ENCODE measurements at regions of chr2 and their contacts with region 1.

Region 1: DNA sequence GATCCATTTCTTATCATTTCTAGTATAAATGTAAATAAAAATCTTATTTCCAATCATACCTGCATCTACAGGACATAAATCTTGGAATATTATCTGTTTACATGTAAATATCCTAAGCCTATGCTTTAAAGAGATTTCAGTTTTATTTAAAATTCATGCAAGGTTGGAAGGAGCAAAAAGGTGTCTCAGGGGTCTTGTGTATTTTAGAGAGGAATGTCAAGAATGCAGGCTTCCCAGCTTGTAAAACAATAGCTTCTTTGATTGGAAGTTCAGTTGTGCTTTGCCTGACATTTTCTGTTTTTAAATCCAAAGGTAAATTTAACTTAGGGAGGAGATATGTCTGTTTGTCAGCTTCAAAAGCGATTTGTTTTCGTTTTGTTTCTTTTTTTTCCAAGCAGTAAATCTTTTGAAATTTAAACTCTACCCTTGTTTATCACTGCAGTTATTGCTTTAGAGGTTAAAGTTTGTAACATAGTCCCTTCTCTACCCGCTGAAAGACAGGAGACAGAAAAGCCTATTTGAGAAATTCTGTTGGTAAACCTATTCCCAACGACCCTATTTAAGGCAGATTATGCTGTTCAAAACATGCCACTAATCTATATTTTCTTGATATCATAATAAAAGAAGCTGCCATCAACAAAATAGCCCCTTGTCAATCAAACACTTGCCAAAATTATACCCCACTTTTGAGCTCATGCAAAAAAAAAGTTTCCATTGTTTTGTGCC is 639.7 kb downstream of the IRS1 start:
- DNase-seq: peak; percentile 34 to 51
- H3K4me3 ChIP-seq: no peak overlapping the region
- H3K4me3 Mint-ChIP-seq: peak overlapping the region; percentile 31
- H3K27ac Mint-ChIP-seq: peak overlapping the region; percentile 85
- H3K4me1 ChIP-seq: peaks cover 32% of the 10 kb centered on the region
- H3K4me1 Mint-ChIP-seq: peaks cover 11% of the 10 kb centered on the region
- H3K27me3 ChIP-seq: no peaks in the 10 kb centered on the region
- H3K27me3 Mint-ChIP-seq: no peaks in the 10 kb centered on the region
- CTCF ChIP-seq: no peak

Region 2: GRCh38 chr2:226118471-226119430 is 41.2 kb before region 1 on chr2:
- CTCF ChIA-PET with region 1: no interaction called
- POLR2A ChIA-PET with region 1: no interaction called
- intact Hi-C with region 1: loop called (anchors 5 kb)
- DNase-seq: no peak
- H3K4me3 ChIP-seq: no peak overlapping the region
- H3K4me3 Mint-ChIP-seq: no peak overlapping the region
- H3K27ac Mint-ChIP-seq: no peak overlapping the region
- H3K4me1 ChIP-seq: peaks cover 26% of the 10 kb centered on the region
- H3K4me1 Mint-ChIP-seq: peaks cover 12% of the 10 kb centered on the region
- H3K27me3 ChIP-seq: no peaks in the 10 kb centered on the region
- H3K27me3 Mint-ChIP-seq: no peaks in the 10 kb centered on the region
- CTCF ChIP-seq: no peak

Region 3: DNA sequence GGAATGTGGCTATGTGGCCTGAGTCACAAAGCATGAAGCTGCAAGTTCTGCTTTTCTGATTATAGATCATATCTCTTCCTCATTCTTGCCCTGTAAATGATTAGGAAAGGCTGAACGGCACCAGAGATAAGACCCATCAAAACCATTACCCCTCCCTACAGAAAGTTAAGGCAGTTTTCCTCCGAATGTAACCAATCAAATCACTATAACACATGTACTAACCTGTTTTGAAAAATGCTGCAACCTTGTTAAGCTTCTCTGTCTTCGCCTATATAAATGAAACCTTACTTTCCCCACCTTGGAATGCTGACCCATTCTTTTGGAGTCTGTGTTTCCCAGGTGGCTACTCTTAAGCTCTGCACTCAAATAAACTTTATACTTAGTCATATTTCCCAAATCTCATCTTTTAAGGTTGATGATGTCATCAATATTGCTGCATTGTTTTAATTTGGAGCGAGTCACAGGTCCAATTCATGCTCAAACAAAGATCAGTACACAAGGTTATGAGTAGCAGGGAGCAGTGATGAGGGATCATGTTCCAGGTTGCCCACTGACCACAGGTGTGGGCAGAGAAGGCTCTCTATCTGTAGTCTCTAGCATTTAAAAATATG is 22.6 kb before region 1 on chr2:
- CTCF ChIA-PET with region 1: no interaction called
- POLR2A ChIA-PET with region 1: no interaction called
- intact Hi-C with region 1: loop called (anchors 1 kb)
- DNase-seq: peak; percentile 27 to 43
- H3K4me3 ChIP-seq: no peak overlapping the region
- H3K4me3 Mint-ChIP-seq: no peak overlapping the region
- H3K27ac Mint-ChIP-seq: peak overlapping the region; percentile 47
- H3K4me1 ChIP-seq: peaks cover 17% of the 10 kb centered on the region
- H3K4me1 Mint-ChIP-seq: peaks cover 12% of the 10 kb centered on the region
- H3K27me3 ChIP-seq: no peaks in the 10 kb centered on the region
- H3K27me3 Mint-ChIP-seq: no peaks in the 10 kb centered on the region
- CTCF ChIP-seq: no peak

Measured in Caco-2 (cell line).